Ascending aorta (tissue), 2 donors: ENCODE measurements at regions of chr16 and their contacts with region 1.

Region 1: DNA sequence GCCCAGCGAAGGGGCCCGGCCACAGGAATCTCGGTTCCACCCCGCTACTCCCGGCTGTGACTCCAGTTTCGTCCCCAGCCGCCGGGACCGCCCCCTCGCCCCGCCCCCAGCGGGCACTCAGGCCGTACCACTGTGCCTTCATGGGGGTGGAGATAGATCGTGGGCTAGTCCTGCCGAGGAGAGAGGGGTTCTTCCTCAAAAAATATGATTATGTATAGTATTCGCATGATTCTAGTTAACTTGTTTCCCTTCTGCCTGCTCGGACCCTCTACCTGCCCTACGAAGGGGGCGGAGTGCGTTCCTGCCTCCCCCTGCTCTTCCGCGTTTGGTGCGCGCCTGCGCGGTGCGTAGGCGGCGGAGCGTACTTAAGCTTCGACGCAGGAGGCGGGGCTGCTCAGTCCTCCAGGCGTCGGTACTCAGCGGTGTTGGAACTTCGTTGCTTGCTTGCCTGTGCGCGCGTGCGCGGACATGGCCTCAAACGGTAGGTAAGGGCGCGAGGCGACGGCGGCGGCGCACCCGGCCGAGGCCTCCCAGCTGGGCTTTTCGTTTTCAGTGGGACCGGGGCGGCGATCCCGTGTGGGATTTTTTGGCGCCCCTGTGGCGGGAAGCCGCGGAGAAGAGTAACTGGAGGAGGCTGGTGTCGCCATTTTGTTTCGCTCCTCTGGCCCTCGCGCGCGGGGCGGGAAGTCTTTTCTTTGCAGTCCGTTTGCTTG is at the start of gene FUS:
- DNase-seq: peak; percentile 44 to 94
- H3K4me3 ChIP-seq: peak within 1 kb of the TSS; percentile 92 to 97
- H3K27ac ChIP-seq: peak within 1 kb of the TSS; percentile 98 to 99
- H3K4me1 ChIP-seq: peaks cover 5 to 35% of the 10 kb centered on the region in 2 donors
- H3K27me3 ChIP-seq: no peaks in the 10 kb centered on the region
- CTCF ChIP-seq: peak in 1 of 3 experiments; percentile 3
- total RNA-seq, gene FUS: 166 TPM

Region 2: GRCh38 chr16:31094424-31095120 is 85.3 kb before region 1 on chr16 and contains the start of gene VKORC1:
- intact Hi-C with region 1: loop called (anchors 5 kb)
- DNase-seq: peak; percentile 88 to 98
- H3K4me3 ChIP-seq: peak within 1 kb of the TSS; percentile 94 to 97
- H3K27ac ChIP-seq: peak within 1 kb of the TSS; percentile 86 to 92
- H3K4me1 ChIP-seq: peaks cover 0 to 3% of the 10 kb centered on the region in 2 donors
- H3K27me3 ChIP-seq: no peaks in the 10 kb centered on the region
- CTCF ChIP-seq: no peak
- total RNA-seq, gene VKORC1: 227 TPM

Region 3: DNA sequence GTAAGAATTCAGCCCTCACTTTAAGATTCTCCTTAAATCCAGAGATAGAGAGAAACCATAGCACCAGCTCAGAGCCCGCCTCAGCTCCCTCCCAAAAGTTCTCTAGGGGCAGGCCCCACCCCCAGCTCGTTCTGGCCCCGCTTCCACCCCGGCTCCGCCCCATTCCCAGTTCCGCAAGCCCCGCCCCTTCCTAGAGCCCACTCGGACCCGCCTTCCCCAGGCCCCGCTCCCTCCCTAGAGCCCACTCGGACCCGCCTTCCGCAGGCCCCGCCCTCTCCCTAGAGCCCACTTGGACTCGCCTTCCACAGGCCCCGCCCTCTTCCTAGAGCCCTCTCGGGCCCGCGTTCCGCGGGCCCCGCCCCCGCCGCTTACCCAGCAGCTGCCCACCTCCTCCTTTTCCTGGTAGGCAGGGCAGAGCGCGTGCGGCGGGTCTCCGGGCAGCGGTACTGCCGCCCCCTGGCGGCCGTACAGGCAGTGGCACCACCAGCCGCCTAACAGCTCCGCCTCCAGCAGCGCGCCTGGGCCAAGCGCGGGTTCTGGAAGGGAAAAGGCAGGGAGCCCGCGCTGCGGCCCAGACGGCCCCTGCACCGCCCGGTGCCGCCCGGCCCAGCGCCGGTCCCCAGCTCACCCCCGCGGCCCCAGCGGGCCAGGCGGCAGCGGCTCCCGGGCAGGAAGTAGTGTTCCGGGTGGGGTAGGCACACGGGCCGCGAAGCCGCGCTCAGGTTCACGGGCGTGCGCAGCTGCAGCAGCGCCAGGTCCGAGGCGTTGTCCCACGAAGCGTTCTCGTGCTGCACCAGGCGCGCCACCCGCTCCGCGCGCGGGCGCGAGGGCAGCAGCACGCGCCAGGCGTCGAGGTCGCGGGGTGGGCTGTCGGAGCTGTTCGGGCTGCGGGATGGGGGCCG is 37.5 kb before region 1 on chr16:
- intact Hi-C with region 1: loop called (anchors 1 kb)
- DNase-seq: peak; percentile 97 to 99
- H3K4me3 ChIP-seq: peak overlapping the region; percentile 59 to 73
- H3K27ac ChIP-seq: peak overlapping the region; percentile 80 to 83
- H3K4me1 ChIP-seq: peaks cover 6 to 24% of the 10 kb centered on the region in 2 donors
- H3K27me3 ChIP-seq: no peaks in the 10 kb centered on the region
- CTCF ChIP-seq: peak; percentile 93 to 99 (median 96)

Region 4: DNA sequence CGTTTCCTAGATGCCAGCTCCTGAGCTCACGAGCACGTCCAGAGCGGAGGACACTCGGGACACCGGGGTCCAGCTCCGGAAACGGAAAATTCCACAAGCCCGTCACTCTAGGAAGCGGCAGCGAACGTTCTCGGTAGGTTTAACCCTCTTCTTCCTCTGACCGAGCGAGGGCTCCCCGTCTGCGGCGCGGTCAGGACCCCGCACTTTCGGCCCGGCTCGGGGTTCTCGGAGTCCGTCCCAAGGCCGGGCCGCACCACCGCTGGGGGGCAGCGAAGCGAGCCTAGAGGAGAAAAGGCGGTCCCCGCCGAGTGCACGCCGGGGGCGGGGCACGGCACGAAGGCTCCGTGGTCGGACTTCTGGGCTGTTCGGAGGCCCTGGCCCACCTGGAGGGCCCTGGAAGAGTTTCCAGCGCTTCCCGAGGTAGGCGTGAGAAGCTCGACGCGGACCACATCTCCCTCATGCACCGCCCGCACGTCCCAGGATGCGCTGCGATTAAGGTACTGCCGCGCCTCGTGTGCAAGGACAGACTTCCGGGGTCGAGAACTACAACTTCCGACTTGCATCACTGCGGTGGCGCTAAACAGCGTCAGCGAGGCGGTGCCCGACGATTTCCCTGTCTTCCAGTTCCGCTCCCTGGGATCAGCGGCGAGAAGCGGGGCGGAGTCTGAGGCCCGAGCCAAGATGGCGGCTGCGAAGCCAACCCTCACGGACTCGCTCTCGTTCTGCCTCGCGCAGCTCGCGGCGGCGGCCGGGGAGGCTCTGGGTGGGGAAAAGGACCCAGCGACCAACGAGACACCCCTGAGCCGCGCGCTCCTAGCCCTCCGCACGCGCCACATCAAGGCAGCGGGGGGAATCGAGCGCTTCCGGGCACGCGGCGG is 279.2 kb after region 1 on chr16 and contains the start of gene ARMC5:
- intact Hi-C with region 1: loop called (anchors 1 kb)
- DNase-seq: peak; percentile 86 to 98
- H3K4me3 ChIP-seq: peak within 1 kb of the TSS; percentile 75 to 84
- H3K27ac ChIP-seq: peak within 1 kb of the TSS; percentile 99 to 100
- H3K4me1 ChIP-seq: peaks cover 20 to 47% of the 10 kb centered on the region in 2 donors
- H3K27me3 ChIP-seq: no peaks in the 10 kb centered on the region
- CTCF ChIP-seq: peak; percentile 55 to 67 (median 64)
- total RNA-seq, gene ARMC5: 10.0 TPM

Region 5: GRCh38 chr16:31713071-31713944 is 533.4 kb after region 1 on chr16:
- intact Hi-C with region 1: loop called (anchors 1 kb)
- DNase-seq: peak; percentile 80 to 97
- H3K4me3 ChIP-seq: peak overlapping the region; percentile 82 to 92
- H3K27ac ChIP-seq: peak overlapping the region; percentile 94
- H3K4me1 ChIP-seq: peaks cover 4 to 11% of the 10 kb centered on the region in 2 donors
- H3K27me3 ChIP-seq: no peaks in the 10 kb centered on the region
- CTCF ChIP-seq: no peak